Ascending aorta (tissue), 2 donors: ENCODE measurements at regions of chr7 and their contacts with region 1.

Region 1: DNA sequence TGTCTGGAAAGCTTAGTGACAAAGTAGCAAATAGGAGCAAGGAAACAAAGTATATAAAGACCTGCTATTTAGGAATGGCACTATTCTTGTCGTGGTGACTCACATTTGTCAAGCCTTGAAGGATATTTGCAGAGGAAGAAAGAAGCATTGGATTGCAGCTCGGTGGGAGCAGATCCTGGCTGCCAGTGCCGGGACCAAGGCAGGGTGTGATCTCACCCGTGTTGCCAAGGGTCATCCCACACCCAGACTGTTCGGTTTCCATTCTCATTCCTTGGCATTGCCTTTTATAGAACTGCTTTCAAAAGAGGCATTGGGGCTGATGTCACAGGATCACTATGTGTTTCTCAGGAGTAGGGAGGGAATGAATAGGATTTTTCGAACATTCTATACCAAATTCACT is 176.2 kb downstream of the GALNT17 start:
- DNase-seq: peak; percentile 42 to 92
- H3K4me3 ChIP-seq: peak overlapping the region in 1 of 2 donors; percentile 29
- H3K27ac ChIP-seq: peak overlapping the region; percentile 80 to 89
- H3K4me1 ChIP-seq: peaks cover 9 to 39% of the 10 kb centered on the region in 2 donors
- H3K27me3 ChIP-seq: no peaks in the 10 kb centered on the region
- CTCF ChIP-seq: no peak

Region 2: DNA sequence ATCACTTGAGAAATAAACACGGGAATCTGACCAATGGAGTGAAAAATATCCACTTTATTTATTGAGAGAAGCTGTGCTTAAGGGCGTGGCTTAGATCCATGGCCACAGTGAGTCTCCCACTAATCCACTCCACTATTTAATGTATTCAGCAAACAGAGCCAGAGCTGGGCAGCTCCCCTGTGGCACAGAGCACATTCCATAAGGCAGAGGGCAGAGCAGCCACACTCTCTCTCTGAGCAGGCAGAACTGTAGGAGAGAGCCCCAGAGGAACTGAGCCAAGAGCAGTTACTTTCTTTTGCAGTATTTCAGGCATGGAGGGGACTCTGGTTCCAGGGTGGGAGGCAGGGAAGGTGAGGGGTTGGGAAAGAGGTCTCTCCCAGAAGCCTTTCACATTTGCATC is 70.2 kb before region 1 on chr7:
- intact Hi-C with region 1: loop called (anchors 2 kb)
- DNase-seq: peak in 1 of 2 donors; percentile 72
- H3K4me3 ChIP-seq: no peak overlapping the region
- H3K27ac ChIP-seq: peak overlapping the region; percentile 79 to 84
- H3K4me1 ChIP-seq: peaks cover 0 to 21% of the 10 kb centered on the region in 2 donors
- H3K27me3 ChIP-seq: no peaks in the 10 kb centered on the region
- CTCF ChIP-seq: peak in 2 of 3 experiments; percentile 49 to 59

Region 3: GRCh38 chr7:71286336-71286735 is 21.8 kb before region 1 on chr7:
- intact Hi-C with region 1: loop called (anchors 2 kb)
- DNase-seq: peak in 1 of 2 donors; percentile 66
- H3K4me3 ChIP-seq: peak overlapping the region; percentile 11 to 33
- H3K27ac ChIP-seq: peak overlapping the region; percentile 45 to 66
- H3K4me1 ChIP-seq: peaks cover 0 to 6% of the 10 kb centered on the region in 2 donors
- H3K27me3 ChIP-seq: no peaks in the 10 kb centered on the region
- CTCF ChIP-seq: no peak

Region 4: GRCh38 chr7:71349682-71350481 is 41.8 kb after region 1 on chr7:
- intact Hi-C with region 1: loop called (anchors 5 kb)
- DNase-seq: no peak
- H3K4me3 ChIP-seq: no peak overlapping the region
- H3K27ac ChIP-seq: no peak overlapping the region
- H3K4me1 ChIP-seq: no peaks in the 10 kb centered on the region
- H3K27me3 ChIP-seq: no peaks in the 10 kb centered on the region
- CTCF ChIP-seq: no peak

Region 5: DNA sequence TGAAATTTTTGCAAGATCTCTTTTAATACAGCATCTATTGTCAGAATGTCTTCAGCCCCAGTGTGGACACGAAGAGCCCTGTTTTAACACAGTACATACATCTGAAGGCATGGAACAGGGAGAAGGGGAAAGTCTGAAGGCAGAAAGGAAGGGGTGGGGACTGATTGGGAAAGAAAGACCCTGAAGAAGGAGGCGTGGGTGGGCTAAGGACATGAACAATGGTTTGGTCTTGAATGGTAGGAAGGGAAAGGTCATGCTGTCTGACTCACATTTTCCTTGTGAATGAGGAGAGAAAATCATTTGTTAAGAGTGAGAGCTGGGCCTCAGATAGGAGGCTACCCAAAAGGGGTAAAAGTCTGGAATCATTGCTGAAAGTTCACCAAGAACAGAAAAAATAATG is 121.0 kb after region 1 on chr7:
- intact Hi-C with region 1: no loop called
- DNase-seq: no peak
- H3K4me3 ChIP-seq: no peak overlapping the region
- H3K27ac ChIP-seq: no peak overlapping the region
- H3K4me1 ChIP-seq: no peaks in the 10 kb centered on the region
- H3K27me3 ChIP-seq: no peaks in the 10 kb centered on the region
- CTCF ChIP-seq: no peak